ENCODE measurements at regions of chr19 and their contacts with region 1.

Region 1: DNA sequence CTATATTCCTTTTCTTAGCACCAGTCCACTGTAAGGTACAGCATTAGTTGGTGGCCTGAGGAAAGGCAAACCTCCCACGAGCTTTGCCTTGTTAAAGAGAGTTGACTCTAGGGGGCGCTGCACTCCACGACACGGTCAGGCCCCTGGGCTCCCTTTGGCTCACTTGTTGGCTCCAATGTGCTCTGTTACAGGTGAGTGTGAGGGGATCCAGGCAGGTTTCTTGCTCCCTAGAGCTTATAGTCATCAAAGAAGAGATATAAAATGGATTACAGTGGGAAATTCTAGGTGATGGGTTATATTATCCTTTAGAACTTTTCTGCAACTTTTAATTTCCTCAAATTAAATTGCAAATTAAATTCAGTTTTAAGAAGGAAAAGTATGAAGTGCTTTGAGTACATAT is 3.7 kb downstream of the WDR87 start:
- DNase-seq: no peak
- H3K4me3 ChIP-seq: no peak overlapping the region
- H3K27me3 ChIP-seq: no peaks in the 10 kb centered on the region
- CTCF ChIP-seq: peak; percentile 85

Region 2: DNA sequence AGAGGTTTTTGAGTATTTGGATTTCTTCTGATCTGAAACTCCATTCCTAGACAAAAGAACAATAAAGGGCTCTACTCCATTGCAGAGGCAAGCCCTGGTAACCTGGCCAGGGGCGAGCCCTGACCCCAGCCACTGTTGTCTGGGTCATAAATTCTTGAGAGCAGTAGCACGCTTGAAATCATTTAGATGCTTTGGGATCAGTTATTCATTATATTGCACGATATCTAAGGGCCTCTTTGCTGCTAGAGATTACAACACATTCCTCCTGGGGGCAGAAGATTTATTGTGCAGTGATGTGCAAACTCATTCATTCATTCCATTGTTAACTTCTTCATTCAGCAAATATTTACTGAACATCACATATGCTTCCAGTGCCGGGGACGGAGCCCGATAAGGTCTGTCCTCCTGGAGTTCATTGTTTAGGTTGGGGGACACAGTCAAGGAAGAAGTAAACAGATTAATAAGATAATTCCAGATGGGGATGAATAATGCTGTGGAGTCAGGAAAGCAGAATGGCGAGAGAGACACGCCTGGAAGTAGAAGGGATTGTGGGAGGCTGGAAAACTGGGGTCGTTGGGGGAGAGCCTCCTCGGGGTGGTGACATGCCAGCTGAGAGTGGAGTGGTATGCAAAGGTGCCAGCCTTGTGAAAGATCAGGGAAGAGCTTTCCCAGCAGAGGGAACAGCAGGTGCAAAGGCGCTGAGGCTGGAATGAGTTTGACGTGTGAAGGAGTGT is 39.3 kb after region 1 on chr19:
- CTCF ChIA-PET with region 1: no interaction called
- POLR2A ChIA-PET with region 1: no interaction called
- DNase-seq: no peak
- H3K4me3 ChIP-seq: no peak overlapping the region
- H3K27me3 ChIP-seq: no peaks in the 10 kb centered on the region
- CTCF ChIP-seq: no peak

Region 3: GRCh38 chr19:38004521-38005223 is 102.0 kb after region 1 on chr19:
- CTCF ChIA-PET with region 1: interaction called, 13 read pairs
- POLR2A ChIA-PET with region 1: interaction called, 5 read pairs
- DNase-seq: peak; percentile 95
- H3K4me3 ChIP-seq: peak overlapping the region; percentile 37
- H3K27me3 ChIP-seq: no peaks in the 10 kb centered on the region
- CTCF ChIP-seq: no peak

Region 4: DNA sequence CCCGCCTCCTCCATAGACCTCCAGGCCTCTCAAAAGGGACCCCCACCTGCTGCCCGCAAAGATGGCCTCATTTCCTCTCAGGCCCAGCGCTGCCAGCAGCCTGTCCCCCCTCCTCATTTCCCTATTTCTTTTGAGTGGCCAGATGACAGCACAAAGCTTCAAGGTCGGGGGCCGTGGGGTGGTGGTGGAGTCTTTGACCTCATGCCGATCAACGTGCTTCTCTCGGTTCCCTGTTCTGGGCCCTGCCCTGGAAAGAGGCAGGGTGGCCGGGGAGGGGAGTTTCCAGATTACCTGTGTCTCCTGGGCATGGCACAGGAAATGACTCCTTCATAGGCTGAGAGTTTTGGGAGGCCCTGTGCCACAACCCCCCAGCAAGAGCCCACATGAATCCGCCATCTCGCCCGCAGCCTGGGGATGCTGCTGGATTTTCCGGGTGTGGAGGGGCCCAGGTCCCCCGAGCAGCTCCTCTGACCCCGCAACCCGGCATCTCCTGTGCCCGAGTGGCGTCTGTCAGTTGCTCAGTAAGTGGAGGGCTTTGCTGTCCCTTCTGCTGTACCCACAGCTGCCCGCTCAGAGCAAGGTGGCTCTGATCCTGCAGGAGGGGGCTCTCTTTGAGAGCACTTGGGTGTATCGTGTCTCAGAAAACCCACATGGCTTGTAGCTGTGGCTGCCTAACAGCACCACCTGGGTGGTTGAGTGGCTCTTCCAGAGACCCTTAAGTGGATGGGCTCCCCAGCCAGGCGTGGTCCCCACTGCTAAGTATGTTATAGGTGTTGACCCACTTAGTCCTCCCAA is 143.8 kb after region 1 on chr19:
- CTCF ChIA-PET with region 1: interaction called, 10 read pairs
- POLR2A ChIA-PET with region 1: no interaction called
- DNase-seq: no peak
- H3K4me3 ChIP-seq: no peak overlapping the region
- H3K27me3 ChIP-seq: no peaks in the 10 kb centered on the region
- CTCF ChIP-seq: no peak

Region 5: DNA sequence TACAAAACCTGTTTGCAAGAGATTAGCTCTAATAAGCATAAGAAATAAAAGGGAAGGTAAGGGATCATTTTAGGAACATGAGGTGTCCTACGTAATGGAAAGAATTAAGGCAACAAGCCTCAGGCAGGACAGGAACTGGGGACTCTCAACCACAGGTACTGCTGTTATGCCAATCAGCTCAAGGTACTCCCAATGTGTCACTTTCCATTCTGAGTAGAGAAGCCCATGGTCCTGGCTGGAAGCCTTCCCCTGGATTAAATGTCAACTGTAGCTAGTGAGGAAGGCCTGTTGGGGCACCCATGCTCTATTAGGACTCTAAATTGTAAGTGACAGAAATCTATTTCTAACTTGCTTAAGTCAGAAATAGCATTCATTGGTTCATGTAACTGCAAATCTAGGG is 186.8 kb after region 1 on chr19:
- CTCF ChIA-PET with region 1: interaction called, 31 read pairs
- POLR2A ChIA-PET with region 1: no interaction called
- DNase-seq: no peak
- H3K4me3 ChIP-seq: no peak overlapping the region
- H3K27me3 ChIP-seq: no peaks in the 10 kb centered on the region
- CTCF ChIP-seq: no peak

Region 6: GRCh38 chr19:38134540-38135149 is 232.0 kb after region 1 on chr19:
- CTCF ChIA-PET with region 1: interaction called, 16 read pairs
- POLR2A ChIA-PET with region 1: no interaction called
- DNase-seq: no peak
- H3K4me3 ChIP-seq: no peak overlapping the region
- H3K27me3 ChIP-seq: no peaks in the 10 kb centered on the region
- CTCF ChIP-seq: peak; percentile 69

Region 7: DNA sequence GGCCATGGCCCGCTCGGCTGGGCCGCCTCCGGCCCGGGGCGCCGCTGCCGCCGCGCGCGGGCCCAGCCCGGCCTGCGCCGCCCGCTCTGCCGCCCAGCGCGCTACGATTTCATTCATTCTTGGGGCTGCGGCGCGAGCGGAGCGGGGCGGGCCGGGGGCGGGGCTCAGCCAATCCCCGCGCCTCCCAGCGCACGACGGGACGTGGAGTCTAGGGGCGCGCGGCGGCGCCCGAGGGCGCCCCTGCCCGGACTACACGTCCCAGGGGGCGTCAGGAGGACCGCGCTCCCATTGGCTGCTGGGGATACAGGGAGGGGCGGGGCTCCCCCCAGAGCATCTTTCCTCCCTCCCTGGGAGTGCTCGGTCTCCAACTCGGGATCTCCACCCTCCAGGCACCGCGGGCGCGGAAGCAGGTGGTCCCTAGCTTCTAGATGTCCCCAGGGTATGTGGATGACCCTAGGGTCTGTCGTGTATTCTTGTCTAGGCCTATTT is 327.0 kb after region 1 on chr19:
- CTCF ChIA-PET with region 1: interaction called, 28 read pairs
- POLR2A ChIA-PET with region 1: interaction called, 3 read pairs
- DNase-seq: peak; percentile 54
- H3K4me3 ChIP-seq: peak overlapping the region; percentile 45
- H3K27me3 ChIP-seq: no peaks in the 10 kb centered on the region
- CTCF ChIP-seq: no peak

Measured in BJ (cell line).